Heart right ventricle (tissue), 16 donors: ENCODE measurements at regions of chr11 and their contacts with region 1.

Region 1: DNA sequence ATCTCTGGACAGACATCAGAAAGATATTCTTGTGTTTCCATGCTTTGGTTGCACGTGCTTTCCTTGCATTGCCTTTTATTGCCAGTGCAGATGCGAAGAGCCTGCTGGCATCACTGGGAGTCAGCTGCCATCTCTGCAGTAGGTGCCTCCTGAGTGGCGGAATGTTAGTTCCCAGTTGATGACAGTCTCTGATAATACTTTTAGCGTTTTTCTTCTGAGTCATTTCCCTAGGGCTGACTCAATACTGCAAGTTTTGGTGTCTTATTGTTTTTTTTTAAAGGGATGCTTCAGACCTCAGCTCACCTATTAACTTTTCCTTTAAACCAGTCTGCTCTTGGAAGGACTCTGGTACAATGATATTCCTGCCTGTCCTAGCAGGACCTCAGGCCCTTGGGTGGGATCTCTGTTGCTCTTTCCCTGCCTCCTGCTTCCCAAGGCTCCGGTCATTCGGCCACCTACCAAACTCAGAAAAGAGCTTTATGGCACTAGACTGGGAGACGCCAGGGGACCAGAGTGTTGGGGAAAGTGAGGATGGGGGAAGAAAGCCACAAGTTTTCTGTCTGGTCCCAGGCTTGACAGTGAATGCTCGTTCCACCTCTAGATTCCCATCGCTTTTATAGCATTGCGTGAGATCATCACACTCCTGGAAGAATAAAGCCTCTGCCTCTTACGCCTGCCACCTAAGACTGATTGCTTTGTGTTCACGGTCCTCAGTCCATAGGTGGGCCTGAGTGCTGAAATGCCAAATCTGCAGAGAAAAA is 308.7 kb downstream of the DDX10 start:
- DNase-seq: no peak
- ATAC-seq: no peak
- H3K4me3 ChIP-seq: no peak overlapping the region
- H3K27ac ChIP-seq: no peak overlapping the region
- H3K4me1 ChIP-seq: peaks cover 0 to 3% (median 0%) of the 10 kb centered on the region in 9 donors
- H3K27me3 ChIP-seq: no peaks in the 10 kb centered on the region
- CTCF ChIP-seq: no peak

Region 2: GRCh38 chr11:109062445-109062844 is 88.9 kb after region 1 on chr11:
- intact Hi-C with region 1: loop called in 1 of 10 experiments (anchors 10 kb)
- DNase-seq: no peak
- ATAC-seq: no peak
- H3K4me3 ChIP-seq: no peak overlapping the region
- H3K27ac ChIP-seq: no peak overlapping the region
- H3K4me1 ChIP-seq: no peaks in the 10 kb centered on the region
- H3K27me3 ChIP-seq: no peaks in the 10 kb centered on the region
- CTCF ChIP-seq: no peak

Region 3: DNA sequence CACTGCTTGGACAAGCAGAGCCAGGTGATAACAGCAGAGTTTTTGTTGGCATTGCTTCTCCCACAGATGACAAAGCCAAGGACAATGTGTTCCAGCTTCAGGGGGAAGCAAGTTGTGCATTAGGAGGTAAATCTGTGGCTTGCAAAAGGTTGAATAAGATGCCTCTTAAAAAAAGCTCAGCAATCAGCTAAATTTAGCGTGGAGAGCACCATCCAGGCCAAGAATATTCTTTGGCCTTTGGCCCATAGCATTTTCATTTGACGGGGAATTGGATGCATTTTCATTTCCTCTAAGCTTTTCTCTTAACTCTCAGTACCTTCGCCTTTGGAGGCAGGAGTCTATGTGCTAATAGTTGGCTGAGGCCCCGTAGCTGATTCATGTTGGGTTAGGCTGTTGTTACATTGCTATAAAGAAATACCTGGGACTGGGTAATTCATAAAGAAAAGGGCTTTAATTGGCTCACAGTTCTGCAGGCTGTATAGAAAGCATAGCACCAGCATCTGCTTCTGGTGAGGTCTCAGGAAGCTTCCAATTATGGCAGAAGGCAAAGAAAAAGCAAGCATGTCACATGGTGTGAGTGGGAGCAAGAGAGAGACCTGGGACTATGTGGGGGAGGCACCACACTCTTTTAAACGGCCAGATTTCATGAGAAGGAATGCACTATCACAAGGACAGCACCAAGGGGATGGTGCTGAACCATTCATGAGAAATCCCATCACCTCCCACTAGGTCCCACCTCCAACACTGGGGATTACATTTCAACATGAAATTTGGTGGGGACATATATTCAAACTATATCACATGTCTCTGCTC is 98.3 kb after region 1 on chr11:
- intact Hi-C with region 1: loop called in 4 of 10 experiments (anchors 5 to 10 kb)
- DNase-seq: peak in 1 of 2 donors; percentile 31
- ATAC-seq: peak; percentile 64 to 96 (median 88)
- H3K4me3 ChIP-seq: no peak overlapping the region
- H3K27ac ChIP-seq: peak overlapping the region in 9 of 10 donors; percentile 26 to 72 (median 56)
- H3K4me1 ChIP-seq: peaks cover 0 to 31% (median 17%) of the 10 kb centered on the region in 9 donors
- H3K27me3 ChIP-seq: no peaks in the 10 kb centered on the region
- CTCF ChIP-seq: no peak